ENCODE measurements at regions of chr5 and their contacts with region 1.

Region 1: GRCh38 chr5:76256116-76256889 is 146.8 kb upstream of the IQGAP2 start:
- DNase-seq: peak; percentile 64 to 78 (median 75)
- H3K4me3 ChIP-seq: no peak overlapping the region
- H3K4me3 Mint-ChIP-seq: peak overlapping the region; percentile 31 to 76
- H3K27ac ChIP-seq: no peak overlapping the region
- H3K27ac Mint-ChIP-seq: no peak overlapping the region
- H3K4me1 ChIP-seq: peaks cover 6% of the 10 kb centered on the region in 2 donors
- H3K4me1 Mint-ChIP-seq: peaks cover 7% of the 10 kb centered on the region
- H3K27me3 ChIP-seq: no peaks in the 10 kb centered on the region
- H3K27me3 Mint-ChIP-seq: peaks cover 0 to 3% (median 2%) of the 10 kb centered on the region in 3 donors
- CTCF ChIP-seq: peak; percentile 78

Region 2: GRCh38 chr5:76082772-76083554 is 173.3 kb before region 1 on chr5 and contains the start of gene SV2C:
- intact Hi-C with region 1: loop called in 1 of 2 experiments (anchors 10 kb)
- DNase-seq: no peak
- H3K4me3 ChIP-seq: peak within 1 kb of the TSS in 1 of 3 experiments; percentile 34
- H3K4me3 Mint-ChIP-seq: peak within 1 kb of the TSS; percentile 43 to 84
- H3K27ac ChIP-seq: no peak within 1 kb of the TSS
- H3K27ac Mint-ChIP-seq: no peak within 1 kb of the TSS
- H3K4me1 ChIP-seq: peaks cover 3 to 9% of the 10 kb centered on the region in 2 donors
- H3K4me1 Mint-ChIP-seq: peaks cover 27% of the 10 kb centered on the region
- H3K27me3 ChIP-seq: peaks cover 79 to 93% of the 10 kb centered on the region in 2 donors
- H3K27me3 Mint-ChIP-seq: peaks cover 80 to 90% (median 84%) of the 10 kb centered on the region in 3 donors
- CTCF ChIP-seq: no peak
- polyA plus RNA-seq, gene SV2C: 0.01 to 0.02 TPM in 2 of 3 donors, not detected in the other

Measured in CD14-positive monocyte (primary cell).